Aorta (tissue), 5 donors: ENCODE measurements at regions of chr6 and their contacts with region 1.

Region 1: GRCh38 chr6:33633462-33634158 is 12.5 kb downstream of the ITPR3 start:
- DNase-seq: peak; percentile 77 to 90
- ATAC-seq: peak; percentile 82
- H3K4me3 ChIP-seq: no peak overlapping the region
- H3K27ac ChIP-seq: no peak overlapping the region
- H3K4me1 ChIP-seq: no peaks in the 10 kb centered on the region
- H3K27me3 ChIP-seq: no peaks in the 10 kb centered on the region

Region 2: DNA sequence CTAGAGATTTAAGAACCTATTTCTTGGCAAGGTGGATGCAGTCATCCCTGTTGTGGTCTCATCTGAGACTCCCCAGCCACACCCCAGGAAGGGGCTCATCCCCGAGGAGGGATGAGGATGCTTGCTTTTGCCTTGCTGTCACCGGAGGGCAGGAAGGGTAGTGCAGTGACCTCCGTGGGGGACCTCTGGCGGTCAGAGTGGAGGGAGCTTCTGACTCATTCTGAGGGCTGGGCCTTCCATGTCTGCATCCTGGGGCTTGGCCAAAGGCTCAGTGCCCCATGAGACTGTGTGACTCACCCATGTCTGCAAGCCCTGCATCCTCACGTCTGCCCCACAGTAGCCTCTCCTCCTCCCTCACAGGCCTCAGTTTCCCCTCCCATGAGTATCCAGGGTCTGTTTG is 39.2 kb after region 1 on chr6:
- intact Hi-C with region 1: loop called in 1 of 2 experiments (anchors 5 kb)
- DNase-seq: peak; percentile 94 to 96
- ATAC-seq: peak; percentile 86
- H3K4me3 ChIP-seq: no peak overlapping the region
- H3K27ac ChIP-seq: no peak overlapping the region
- H3K4me1 ChIP-seq: no peaks in the 10 kb centered on the region
- H3K27me3 ChIP-seq: no peaks in the 10 kb centered on the region